OCI-LY7 (cell line): ENCODE measurements at regions of chr3 and their contacts with region 1.

Region 1: DNA sequence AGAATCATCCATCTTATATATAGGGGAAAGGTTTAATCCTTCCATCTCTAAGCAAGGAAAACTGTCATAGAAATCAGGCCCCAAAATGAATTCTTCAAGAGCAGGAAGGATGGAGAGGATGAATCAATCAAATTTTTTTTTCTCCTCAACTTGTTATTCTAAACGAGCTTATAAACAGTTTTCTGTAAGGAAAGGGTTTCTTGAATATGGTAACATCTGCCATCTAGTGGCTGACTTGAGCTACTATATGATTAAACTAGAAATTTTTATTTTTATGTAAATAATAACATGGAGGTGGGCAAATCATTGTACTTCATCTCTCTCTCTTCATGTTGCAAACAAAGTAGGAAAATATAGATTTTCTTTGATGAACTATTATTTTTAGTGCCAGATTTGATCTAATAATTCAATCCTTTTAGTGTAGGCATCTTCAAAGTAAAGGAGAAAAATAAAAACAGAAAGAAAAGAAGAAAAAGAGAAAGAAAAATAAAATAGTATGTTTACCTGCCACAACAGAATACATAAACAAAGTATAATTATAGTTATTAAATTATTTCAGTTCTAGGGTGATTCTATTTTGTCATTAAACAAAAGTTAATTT is 146.6 kb downstream of the SERPINI1 start:
- DNase-seq: peak; percentile 83
- H3K4me3 ChIP-seq: no peak overlapping the region
- H3K27ac ChIP-seq: no peak overlapping the region
- H3K4me1 ChIP-seq: peaks cover 6% of the 10 kb centered on the region
- CTCF ChIP-seq: peak; percentile 91

Region 2: DNA sequence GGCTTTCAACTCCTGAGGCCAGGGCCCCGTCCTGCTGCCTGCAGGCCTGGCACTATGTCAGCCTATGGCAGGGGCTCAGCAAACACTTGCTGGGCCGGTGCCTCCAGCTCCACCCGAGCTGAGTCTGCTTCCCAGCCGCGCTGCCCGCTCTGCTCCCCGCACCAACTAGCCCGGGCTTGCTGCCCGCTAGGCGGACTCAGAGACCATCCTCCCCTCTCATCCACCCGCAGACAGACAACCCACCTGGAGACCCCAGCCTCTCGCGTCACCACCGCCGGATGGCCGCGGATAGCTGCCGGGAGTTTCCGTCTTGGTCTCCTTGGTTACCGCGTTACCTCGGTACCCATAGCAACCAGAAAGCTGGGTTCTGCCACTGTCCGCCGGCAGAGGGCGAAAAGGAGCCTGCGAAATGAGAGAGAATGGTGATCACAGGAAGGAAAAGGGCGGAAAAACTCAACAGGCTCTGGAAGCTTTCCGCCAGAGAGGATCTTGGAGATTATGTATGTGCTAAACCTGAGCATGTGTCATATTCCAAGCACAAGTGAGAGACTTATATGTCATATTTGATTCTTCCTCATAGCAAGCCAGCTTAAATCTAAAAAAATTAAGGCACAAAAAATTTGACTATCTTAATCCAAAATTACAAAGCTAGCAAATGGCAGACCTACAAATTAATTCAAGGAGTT is 502.0 kb before region 1 on chr3 and contains the start of gene ZBBX:
- CTCF ChIA-PET with region 1: no interaction called
- POLR2A ChIA-PET with region 1: interaction called, 3 read pairs
- intact Hi-C with region 1: loop called (anchors 2 kb)
- DNase-seq: peak; percentile 87
- H3K4me3 ChIP-seq: peak within 1 kb of the TSS; percentile 63
- H3K27ac ChIP-seq: no peak within 1 kb of the TSS
- H3K4me1 ChIP-seq: no peaks in the 10 kb centered on the region
- CTCF ChIP-seq: peak; percentile 95
- total RNA-seq, gene ZBBX: not detected in 2 replicates

Region 3: DNA sequence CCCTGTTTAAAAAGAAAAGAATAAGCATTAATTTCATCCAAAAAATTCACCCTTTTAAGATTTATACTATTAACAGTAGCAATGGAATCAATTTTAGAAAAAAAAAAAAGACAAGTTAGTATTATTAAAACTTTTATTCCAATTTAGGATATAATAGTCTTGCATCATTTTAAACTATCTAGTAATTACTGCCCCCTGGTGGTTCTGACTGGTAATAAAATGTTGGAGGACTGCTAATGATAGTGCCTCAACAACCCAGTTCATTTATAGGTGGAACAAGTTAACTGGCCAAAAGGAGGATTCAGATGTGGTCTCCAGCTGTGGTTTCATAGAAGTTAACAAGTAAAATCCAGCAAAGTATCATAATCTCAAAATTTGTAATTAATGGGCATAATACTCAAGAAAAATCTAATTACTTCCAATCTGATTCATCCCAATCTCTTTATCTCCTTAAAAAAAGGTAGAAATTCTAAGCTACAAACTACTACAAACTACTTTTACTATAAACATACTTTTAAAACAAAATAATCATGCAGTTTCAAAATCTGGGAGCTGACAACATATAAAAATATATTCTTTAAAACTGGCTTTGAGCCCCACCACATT is 197.7 kb before region 1 on chr3:
- CTCF ChIA-PET with region 1: no interaction called
- POLR2A ChIA-PET with region 1: interaction called, 3 read pairs
- intact Hi-C with region 1: loop called (anchors 2 kb)
- DNase-seq: peak; percentile 78
- H3K4me3 ChIP-seq: no peak overlapping the region
- H3K27ac ChIP-seq: no peak overlapping the region
- H3K4me1 ChIP-seq: no peaks in the 10 kb centered on the region
- CTCF ChIP-seq: peak; percentile 98

Region 4: DNA sequence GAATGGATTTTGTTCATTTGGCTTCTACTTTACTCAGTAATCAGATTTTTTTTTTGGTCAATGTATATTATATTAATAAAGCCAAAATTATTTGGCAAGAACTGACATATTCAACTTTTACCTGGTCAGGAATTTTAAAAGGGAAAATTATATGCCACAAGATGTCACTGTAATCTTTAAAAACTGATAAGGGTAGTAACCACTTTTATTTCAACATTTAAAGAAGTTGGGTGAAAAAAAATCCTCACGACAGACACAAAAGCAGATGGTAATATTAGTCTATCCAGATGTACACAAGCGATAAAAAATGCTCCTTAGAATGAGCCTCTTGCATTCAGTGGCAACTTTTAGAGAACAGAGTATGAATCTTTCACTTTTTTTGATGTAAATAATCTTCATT is 44.7 kb before region 1 on chr3:
- CTCF ChIA-PET with region 1: interaction called, 6 read pairs
- POLR2A ChIA-PET with region 1: interaction called, 3 read pairs
- intact Hi-C with region 1: loop called (anchors 1 kb)
- DNase-seq: peak; percentile 39
- H3K4me3 ChIP-seq: no peak overlapping the region
- H3K27ac ChIP-seq: no peak overlapping the region
- H3K4me1 ChIP-seq: peaks cover 13% of the 10 kb centered on the region
- CTCF ChIP-seq: peak; percentile 78

Region 5: GRCh38 chr3:168047190-168047795 is 165.1 kb after region 1 on chr3:
- CTCF ChIA-PET with region 1: no interaction called
- POLR2A ChIA-PET with region 1: no interaction called
- intact Hi-C with region 1: no loop called
- DNase-seq: peak; percentile 89
- H3K4me3 ChIP-seq: no peak overlapping the region
- H3K27ac ChIP-seq: no peak overlapping the region
- H3K4me1 ChIP-seq: peaks cover 7% of the 10 kb centered on the region
- CTCF ChIP-seq: peak; percentile 100